ENCODE measurements at regions of chr20 and their contacts with region 1.

Region 1: GRCh38 chr20:18739751-18740166 is 73.8 kb upstream of the SCP2D1 start:
- DNase-seq: peak; percentile 90
- ATAC-seq: peak; percentile 94
- H3K4me3 ChIP-seq: no peak overlapping the region
- H3K27ac ChIP-seq: peak overlapping the region; percentile 4; the same call in 1 of the 2 replicates
- H3K4me1 ChIP-seq: peaks cover 8% of the 10 kb centered on the region
- H3K27me3 ChIP-seq: no peaks in the 10 kb centered on the region
- CTCF ChIP-seq: no peak
- POLR2A ChIP-seq: no peak
- RAD21 ChIP-seq: no peak

Region 2: DNA sequence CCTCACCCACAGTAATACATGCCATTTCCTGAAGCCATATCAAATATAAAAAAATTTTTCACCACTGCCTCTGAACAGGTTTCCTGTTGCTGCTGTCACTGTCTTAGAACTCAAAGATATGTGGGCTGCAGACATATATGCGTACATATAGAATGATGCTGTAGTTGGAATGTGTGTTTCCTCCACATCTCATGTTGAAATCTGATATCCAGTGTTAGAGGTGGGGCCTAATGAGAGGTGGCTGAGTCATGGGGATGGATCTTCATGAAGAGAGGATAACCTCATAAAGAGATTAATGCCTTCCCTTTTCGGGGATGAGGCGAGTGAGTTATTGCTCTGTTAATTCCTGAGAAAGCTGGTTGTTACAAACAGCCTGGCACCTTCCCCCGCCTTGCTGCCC is 66.1 kb after region 1 on chr20:
- CTCF ChIA-PET with region 1: no interaction called
- POLR2A ChIA-PET with region 1: interaction called, 12 read pairs
- dilution Hi-C with region 1: no loop called
- in situ Hi-C with region 1: no loop called
- intact Hi-C with region 1: no loop called
- DNase-seq: peak; percentile 41
- ATAC-seq: no peak; the same call in 1 of the 2 replicates
- H3K4me3 ChIP-seq: no peak overlapping the region
- H3K27ac ChIP-seq: no peak overlapping the region
- H3K4me1 ChIP-seq: no peaks in the 10 kb centered on the region
- H3K27me3 ChIP-seq: no peaks in the 10 kb centered on the region
- CTCF ChIP-seq: no peak
- POLR2A ChIP-seq: no peak
- RAD21 ChIP-seq: no peak